ENCODE measurements at regions of chr6 and their contacts with region 1.

Region 1: DNA sequence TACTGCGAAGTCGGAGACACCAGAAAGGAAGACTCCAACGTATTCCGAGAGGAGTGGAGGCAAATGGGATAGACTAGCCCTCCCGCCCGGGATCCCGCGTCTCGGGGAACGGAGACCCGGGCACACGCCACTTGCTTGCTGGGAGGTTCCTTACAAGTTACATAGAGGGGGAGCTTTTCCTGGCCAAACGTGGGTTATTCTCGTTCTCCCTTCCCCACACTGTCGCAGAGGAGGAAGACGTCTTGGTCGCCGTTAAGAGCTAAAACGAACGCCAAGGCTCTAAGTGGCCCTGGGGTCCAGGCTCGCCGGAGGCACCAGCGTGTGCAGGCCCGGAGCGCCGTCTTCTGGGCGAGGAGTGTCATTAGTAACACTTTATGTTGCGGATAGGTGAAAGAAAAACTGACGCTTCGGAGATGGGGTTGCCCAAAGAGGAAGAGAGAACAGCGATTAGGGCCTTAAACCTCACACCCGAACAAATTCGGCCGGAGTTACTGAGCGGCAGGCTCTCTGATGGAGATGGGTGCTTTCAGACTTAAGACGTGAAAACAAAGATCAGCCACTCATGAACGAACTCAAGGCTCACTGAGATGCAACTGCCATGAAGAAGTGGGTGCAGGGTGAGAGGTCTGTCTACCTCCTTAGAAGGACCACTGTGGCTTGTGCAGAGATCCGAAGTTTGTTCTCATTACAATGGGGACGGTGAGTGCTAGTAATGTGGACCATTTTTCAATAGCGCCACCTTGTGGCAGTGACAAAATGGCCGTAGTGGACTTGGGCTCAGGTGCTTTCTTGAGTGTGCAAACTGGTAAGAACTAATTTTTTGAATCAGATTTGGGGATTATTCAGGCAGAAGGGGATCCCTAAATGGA is 11.7 kb upstream of the ZNF311 start:
- DNase-seq: peak in 1 of 2 donors; percentile 92
- H3K4me3 ChIP-seq: peak overlapping the region; percentile 47 to 71
- H3K27ac ChIP-seq: peak overlapping the region in 1 of 2 donors; percentile 67
- H3K4me1 ChIP-seq: peaks cover 0 to 2% of the 10 kb centered on the region in 2 donors
- H3K27me3 ChIP-seq: peaks cover 5% of the 10 kb centered on the region
- CTCF ChIP-seq: peak; percentile 53 to 65 (median 61)

Region 2: GRCh38 chr6:27902335-27903314 is 1114.2 kb before region 1 on chr6:
- intact Hi-C with region 1: loop called (anchors 10 kb)
- DNase-seq: peak in 1 of 2 donors; percentile 93
- H3K4me3 ChIP-seq: peak overlapping the region; percentile 59 to 73
- H3K27ac ChIP-seq: peak overlapping the region; percentile 87 to 94
- H3K4me1 ChIP-seq: peaks cover 0 to 3% of the 10 kb centered on the region in 2 donors
- H3K27me3 ChIP-seq: no peaks in the 10 kb centered on the region
- CTCF ChIP-seq: no peak

Region 3: GRCh38 chr6:28683944-28684538 is 332.8 kb before region 1 on chr6:
- intact Hi-C with region 1: loop called (anchors 1 kb)
- DNase-seq: no peak
- H3K4me3 ChIP-seq: no peak overlapping the region
- H3K27ac ChIP-seq: no peak overlapping the region
- H3K4me1 ChIP-seq: no peaks in the 10 kb centered on the region
- H3K27me3 ChIP-seq: no peaks in the 10 kb centered on the region
- CTCF ChIP-seq: peak in 2 of 3 experiments; percentile 30 to 39

Region 4: GRCh38 chr6:28863604-28864320 is 153.0 kb before region 1 on chr6:
- intact Hi-C with region 1: loop called (anchors 10 kb)
- DNase-seq: peak in 1 of 2 donors; percentile 86
- H3K4me3 ChIP-seq: peak overlapping the region; percentile 66 to 81
- H3K27ac ChIP-seq: peak overlapping the region; percentile 59 to 78
- H3K4me1 ChIP-seq: peaks cover 0 to 3% of the 10 kb centered on the region in 2 donors
- H3K27me3 ChIP-seq: no peaks in the 10 kb centered on the region
- CTCF ChIP-seq: no peak

Region 5: DNA sequence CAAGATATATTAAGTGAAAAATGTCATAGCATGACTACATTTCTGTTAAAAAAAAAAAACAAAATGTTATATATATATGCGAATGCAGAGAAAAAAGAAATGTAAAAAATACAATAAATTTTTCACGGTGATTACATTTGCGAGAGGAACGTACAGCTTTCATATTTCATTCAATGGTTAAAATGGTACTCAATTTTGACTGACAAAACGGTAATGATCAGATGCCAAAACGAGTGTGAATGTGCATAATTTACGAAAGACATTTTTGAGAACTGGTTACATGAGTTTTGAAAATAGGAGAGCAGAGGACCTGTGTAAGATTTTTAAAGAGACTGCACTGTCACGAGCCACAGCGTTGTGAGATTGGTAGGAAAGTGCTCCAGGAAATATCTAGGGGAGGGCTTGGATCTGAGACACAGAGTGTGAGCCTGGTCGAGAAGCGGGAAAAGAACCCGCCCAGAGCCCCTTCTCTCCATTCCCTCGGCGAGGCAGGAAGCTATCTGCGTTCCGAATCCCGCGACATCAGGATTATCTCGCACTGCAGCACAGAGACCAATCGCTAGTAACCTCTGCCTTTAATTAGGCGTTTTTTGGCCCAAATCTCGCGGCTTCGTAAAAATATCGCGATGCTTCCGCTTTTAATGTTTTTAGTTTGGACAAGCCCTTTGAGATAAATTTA is 121.5 kb before region 1 on chr6:
- intact Hi-C with region 1: loop called (anchors 1 kb)
- DNase-seq: peak; percentile 86 to 98
- H3K4me3 ChIP-seq: peak overlapping the region; percentile 60 to 72
- H3K27ac ChIP-seq: peak overlapping the region; percentile 95 to 96
- H3K4me1 ChIP-seq: no peaks in the 10 kb centered on the region
- H3K27me3 ChIP-seq: no peaks in the 10 kb centered on the region
- CTCF ChIP-seq: no peak

Measured in ascending aorta (tissue), 2 donors.